ENCODE measurements at regions of chr12 and their contacts with region 1.

Region 1: DNA sequence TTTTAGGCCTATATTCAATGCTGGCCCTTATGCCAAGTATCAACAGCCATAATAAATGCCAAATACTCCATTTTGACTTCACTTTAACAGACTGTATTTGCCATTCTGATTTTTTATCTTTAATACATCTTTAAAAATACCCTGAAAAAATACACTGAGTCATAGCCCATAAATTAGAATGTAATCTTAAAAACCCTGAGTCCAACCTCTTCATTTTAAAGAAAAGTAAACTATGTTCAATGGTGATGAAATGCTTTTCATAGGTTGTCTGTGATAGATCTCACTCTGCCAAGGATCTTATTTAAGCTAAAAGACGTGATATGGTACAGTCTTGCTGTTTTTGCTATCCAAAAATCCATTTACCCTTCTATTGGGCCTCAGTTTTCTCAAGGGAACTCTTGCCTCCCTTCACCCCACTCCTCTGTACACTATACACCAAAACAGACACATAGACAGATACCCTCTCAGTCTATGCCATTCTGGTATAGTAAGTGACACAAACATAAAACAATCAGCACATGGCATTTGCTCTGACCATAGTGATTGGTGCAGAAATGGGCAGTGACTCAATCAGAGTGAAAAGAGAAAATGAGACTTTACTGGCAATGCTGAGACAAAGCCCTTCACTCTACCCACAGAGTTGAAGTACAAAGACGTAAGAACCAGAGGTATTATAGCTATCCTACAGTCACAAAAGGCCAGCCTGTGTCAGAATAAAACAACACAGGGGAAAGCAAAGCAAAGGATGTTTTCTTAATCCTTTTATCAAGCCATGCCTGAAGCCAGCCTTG is 49.1 kb downstream of the BTG1 start:
- DNase-seq: peak; percentile 17
- H3K4me3 Mint-ChIP-seq: no peak overlapping the region
- H3K27ac Mint-ChIP-seq: peak overlapping the region; percentile 70
- H3K4me1 Mint-ChIP-seq: peaks cover 24% of the 10 kb centered on the region
- H3K27me3 Mint-ChIP-seq: no peaks in the 10 kb centered on the region

Region 2: DNA sequence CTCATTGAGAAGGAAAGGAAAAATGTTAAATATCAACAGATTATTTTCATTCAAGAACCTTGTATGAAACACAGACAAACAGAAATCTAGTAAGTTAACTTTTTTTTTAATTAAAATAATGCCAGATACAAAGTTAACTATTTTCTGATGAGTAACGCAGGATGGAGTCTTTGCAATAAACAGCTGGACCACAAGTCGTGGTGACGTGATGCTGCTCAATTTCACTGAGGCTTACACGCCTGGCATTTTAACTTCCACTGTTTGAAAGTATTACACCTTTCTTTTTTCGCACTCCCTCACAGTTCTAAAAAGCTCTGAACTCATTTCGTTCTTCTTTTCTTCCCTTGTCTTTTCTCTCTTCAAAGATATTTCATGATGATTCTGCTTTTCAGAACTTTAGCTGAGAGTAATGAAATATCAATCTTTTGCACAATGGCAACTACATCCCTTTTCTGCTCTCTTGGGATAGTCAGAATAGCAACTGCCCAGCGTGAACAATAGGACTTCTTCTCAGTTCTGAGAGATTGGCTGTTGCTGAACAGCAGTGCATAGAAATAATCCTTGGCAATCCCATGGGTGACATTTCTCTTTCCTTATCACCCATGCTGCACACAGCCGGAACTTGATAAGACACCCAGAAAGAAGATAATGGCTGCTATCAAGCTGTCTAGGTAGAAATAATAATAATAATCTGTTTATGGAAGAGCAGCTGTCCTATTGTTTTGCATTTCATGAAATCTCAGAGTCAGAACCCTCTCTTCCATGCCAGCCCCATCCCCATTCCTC is 111.3 kb before region 1 on chr12:
- CTCF ChIA-PET with region 1: no interaction called
- POLR2A ChIA-PET with region 1: no interaction called
- intact Hi-C with region 1: no loop called
- DNase-seq: no peak
- H3K4me3 Mint-ChIP-seq: no peak overlapping the region
- H3K27ac Mint-ChIP-seq: no peak overlapping the region
- H3K4me1 Mint-ChIP-seq: peaks cover 22% of the 10 kb centered on the region
- H3K27me3 Mint-ChIP-seq: no peaks in the 10 kb centered on the region

Region 3: DNA sequence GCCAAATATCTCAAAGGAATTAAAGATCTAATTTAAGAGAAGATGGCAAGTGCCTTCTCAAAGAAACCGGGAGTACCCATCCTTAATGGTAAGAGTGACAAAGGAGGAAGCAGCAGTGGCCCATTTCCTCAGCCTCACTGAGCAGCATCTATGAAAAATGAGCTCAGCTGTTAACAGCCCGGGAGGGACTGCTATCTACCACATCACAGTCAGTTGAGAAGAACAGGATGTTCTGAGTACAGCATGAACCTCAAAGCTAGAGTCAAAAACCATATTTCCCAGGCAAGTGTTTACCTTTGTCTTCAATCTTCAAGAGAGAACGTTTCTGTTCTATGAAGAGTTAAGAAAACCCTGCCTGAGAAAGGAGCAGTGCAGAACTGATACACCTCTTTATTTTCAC is 65.9 kb before region 1 on chr12:
- CTCF ChIA-PET with region 1: no interaction called
- POLR2A ChIA-PET with region 1: no interaction called
- intact Hi-C with region 1: no loop called
- DNase-seq: peak; percentile 69
- H3K4me3 Mint-ChIP-seq: peak overlapping the region; percentile 25
- H3K27ac Mint-ChIP-seq: peak overlapping the region; percentile 54
- H3K4me1 Mint-ChIP-seq: peaks cover 84% of the 10 kb centered on the region
- H3K27me3 Mint-ChIP-seq: no peaks in the 10 kb centered on the region

Region 4: GRCh38 chr12:92108651-92109050 is 12.1 kb after region 1 on chr12:
- CTCF ChIA-PET with region 1: no interaction called
- POLR2A ChIA-PET with region 1: no interaction called
- intact Hi-C with region 1: loop called (anchors 1 kb)
- DNase-seq: no peak
- H3K4me3 Mint-ChIP-seq: no peak overlapping the region
- H3K27ac Mint-ChIP-seq: no peak overlapping the region
- H3K4me1 Mint-ChIP-seq: peaks cover 61% of the 10 kb centered on the region
- H3K27me3 Mint-ChIP-seq: no peaks in the 10 kb centered on the region

Region 5: DNA sequence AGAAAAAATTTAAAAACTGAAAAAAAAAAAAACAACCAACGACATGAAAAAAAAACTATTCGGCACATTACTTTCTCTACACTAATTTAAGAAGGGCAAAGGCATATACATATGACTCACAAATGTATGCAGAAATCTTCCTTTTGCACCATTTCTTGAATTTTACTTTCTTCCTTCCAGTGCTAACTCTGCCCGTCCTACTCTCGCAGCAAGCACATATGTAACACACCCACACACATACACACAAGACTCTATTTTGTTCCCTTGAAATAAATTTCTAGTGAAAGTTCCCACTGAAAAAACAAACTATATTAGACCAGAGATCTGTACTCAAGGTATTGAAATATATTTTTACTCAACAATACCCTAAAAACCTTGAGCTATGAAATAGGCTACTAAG is 34.5 kb after region 1 on chr12:
- CTCF ChIA-PET with region 1: no interaction called
- POLR2A ChIA-PET with region 1: no interaction called
- intact Hi-C with region 1: loop called (anchors 2 kb)
- DNase-seq: no peak
- H3K4me3 Mint-ChIP-seq: peak overlapping the region; percentile 64
- H3K27ac Mint-ChIP-seq: peak overlapping the region; percentile 88
- H3K4me1 Mint-ChIP-seq: peaks cover 79% of the 10 kb centered on the region
- H3K27me3 Mint-ChIP-seq: no peaks in the 10 kb centered on the region

Measured in activated CD4-positive, alpha-beta memory T cell treated with anti-CD3 and anti-CD28 coated beads for 36 hours (primary cell).